ENCODE measurements at regions of chr14 and their contacts with region 1.

Region 1: DNA sequence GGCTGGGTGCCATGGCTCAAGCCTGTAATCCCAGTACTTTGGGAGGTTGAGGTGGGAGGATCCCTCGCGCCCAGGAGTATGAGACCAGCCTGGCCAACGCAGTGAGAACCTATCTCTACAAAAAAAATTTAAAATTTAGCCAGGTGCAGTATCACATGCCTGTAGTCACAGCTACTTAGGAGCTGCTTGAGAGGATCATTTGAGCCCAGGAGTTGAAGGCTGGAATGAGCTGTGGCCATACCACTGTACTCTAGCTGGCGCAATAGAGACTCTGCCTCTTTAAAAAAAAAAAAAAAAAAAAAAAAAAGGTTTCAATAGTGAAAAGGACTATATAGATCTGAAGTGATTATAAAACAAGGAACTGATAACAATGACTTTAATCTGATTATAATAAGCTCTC is 13.5 kb downstream of the PSMA3 start:
- DNase-seq: no peak
- H3K4me3 ChIP-seq: no peak overlapping the region
- H3K27ac ChIP-seq: no peak overlapping the region
- H3K4me1 ChIP-seq: no peaks in the 10 kb centered on the region
- H3K27me3 ChIP-seq: no peaks in the 10 kb centered on the region
- CTCF ChIP-seq: no peak

Region 2: GRCh38 chr14:58288106-58288792 is 30.1 kb after region 1 on chr14:
- CTCF ChIA-PET with region 1: no interaction called
- POLR2A ChIA-PET with region 1: interaction called, 14 read pairs
- intact Hi-C with region 1: no loop called
- DNase-seq: no peak
- H3K4me3 ChIP-seq: no peak overlapping the region
- H3K27ac ChIP-seq: no peak overlapping the region
- H3K4me1 ChIP-seq: no peaks in the 10 kb centered on the region
- H3K27me3 ChIP-seq: no peaks in the 10 kb centered on the region
- CTCF ChIP-seq: no peak

Region 3: GRCh38 chr14:58414845-58415244 is 156.7 kb after region 1 on chr14:
- CTCF ChIA-PET with region 1: no interaction called
- POLR2A ChIA-PET with region 1: no interaction called
- intact Hi-C with region 1: no loop called
- DNase-seq: no peak
- H3K4me3 ChIP-seq: no peak overlapping the region
- H3K27ac ChIP-seq: no peak overlapping the region
- H3K4me1 ChIP-seq: no peaks in the 10 kb centered on the region
- H3K27me3 ChIP-seq: no peaks in the 10 kb centered on the region
- CTCF ChIP-seq: no peak

Measured in A673 (cell line).